ENCODE measurements at regions of chr17 and their contacts with region 1.

Region 1: DNA sequence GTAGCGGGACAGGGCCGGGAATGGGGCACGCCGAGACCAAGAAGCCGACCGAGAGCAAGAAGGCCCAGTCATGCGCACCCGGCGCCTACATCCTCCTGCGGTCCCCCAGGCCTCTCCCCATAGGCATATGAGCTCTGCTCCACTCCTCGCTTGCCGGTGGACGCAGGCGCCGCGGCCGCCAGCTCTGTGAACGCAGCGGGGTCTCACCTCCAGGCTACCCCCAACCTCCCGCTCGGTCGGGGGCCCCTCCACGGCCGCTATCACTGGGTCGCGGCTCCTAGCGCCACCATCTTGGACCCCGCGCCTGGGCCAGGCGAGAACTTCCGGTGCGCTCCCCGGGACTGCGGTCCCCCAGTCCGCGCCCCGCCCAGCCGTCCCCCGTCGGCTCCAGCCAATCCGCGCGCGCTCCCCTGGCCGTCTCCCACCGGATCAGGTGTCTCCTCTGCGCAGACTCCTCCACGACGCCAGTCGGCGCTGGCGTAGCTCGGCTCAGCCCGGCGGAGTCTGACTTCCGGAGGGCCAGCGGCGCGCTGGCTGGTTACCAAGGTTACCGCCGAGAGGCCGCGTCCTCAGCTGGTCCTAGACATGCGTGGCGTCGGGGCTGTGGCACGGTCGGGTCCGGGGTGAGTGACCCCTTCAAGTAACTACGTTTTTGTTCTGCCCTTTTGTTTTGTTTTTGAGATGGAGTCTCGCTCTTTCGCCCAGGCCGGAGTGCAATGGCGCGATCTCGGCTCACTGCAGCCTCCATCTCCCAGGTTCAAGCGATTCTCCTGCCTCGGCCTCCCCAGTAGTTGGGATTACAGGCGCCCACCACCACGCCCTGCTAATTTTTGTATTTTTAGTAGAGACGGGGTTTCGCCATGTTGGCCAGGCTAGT is at the start of gene ZNF594:
- DNase-seq: peak; percentile 94 to 96
- ATAC-seq: peak; percentile 97
- H3K4me3 ChIP-seq: peak within 1 kb of the TSS; percentile 85 to 92 (median 88)
- H3K27ac ChIP-seq: peak within 1 kb of the TSS; percentile 81 to 89 (median 84)
- H3K4me1 ChIP-seq: peaks cover 19 to 22% of the 10 kb centered on the region in 2 donors
- H3K27me3 ChIP-seq: no peaks in the 10 kb centered on the region
- CTCF ChIP-seq: peak; percentile 65 to 76 (median 69)
- POLR2A ChIP-seq: peak; percentile 69 to 86
- total RNA-seq, gene ZNF594: 1.1 to 6.7 (median 2.9) TPM

Region 2: DNA sequence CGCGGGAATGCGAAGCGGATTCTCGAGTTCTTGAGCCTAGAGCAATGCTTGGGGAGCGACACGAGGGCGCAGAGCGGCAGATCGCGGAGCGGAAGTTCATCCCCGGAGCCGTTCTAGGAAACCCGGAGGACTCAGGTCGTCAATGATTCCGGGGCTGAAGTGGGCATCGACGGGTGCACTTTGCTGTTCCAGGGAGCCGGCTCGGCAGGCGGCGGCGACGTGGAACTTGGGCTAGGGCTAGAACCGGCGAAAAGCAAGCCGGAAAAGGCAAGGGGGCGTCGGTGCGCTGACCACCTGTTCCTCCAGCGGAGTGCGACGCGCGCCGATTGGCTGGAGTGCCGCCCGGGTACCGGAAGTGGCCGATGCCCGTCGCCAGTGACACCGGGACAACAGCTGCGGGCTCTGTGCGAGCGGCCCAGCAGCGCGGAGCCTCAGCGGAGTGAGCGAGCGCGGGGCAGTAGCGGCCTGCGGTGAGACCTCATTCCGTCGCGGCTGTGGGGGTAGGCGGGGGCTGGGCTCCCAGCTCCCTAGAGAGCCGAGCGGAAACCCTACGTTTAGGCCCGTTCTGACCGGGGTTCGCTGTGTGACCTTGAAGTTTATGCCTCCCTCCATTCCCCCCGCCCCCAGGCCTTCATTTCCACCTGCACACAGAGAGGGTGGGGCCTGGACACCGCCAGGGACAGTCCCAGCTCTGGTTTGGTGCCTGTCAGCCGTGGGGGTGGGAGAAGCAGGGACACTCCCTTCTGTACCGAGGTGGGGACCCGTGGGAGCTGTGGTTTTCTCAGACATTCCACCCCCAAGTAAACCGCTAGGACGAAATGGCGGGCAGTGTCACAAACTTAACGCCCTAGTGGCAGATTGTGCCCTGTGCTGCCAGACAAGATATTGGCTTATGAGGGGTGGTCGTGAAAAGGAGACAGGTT is 113.4 kb before region 1 on chr17 and contains the start of gene ZFP3:
- in situ Hi-C with region 1: no loop called
- intact Hi-C with region 1: loop called (anchors 1 kb)
- DNase-seq: peak; percentile 81 to 89
- ATAC-seq: peak; percentile 98
- H3K4me3 ChIP-seq: peak within 1 kb of the TSS; percentile 88 to 98 (median 94)
- H3K27ac ChIP-seq: peak within 1 kb of the TSS; percentile 91 to 98 (median 97)
- H3K4me1 ChIP-seq: peaks cover 17 to 19% of the 10 kb centered on the region in 2 donors
- H3K27me3 ChIP-seq: no peaks in the 10 kb centered on the region
- CTCF ChIP-seq: peak in 2 of 5 experiments; percentile 3 to 31
- POLR2A ChIP-seq: peak; percentile 85 to 90
- total RNA-seq, gene ZFP3: 6.1 to 11.4 (median 7.6) TPM

Region 3: GRCh38 chr17:5111402-5112204 is 80.2 kb before region 1 on chr17 and contains the start of gene ZNF232:
- in situ Hi-C with region 1: no loop called
- intact Hi-C with region 1: loop called (anchors 5 kb)
- DNase-seq: peak; percentile 90 to 93
- ATAC-seq: peak; percentile 87 to 94
- H3K4me3 ChIP-seq: peak within 1 kb of the TSS; percentile 90 to 95 (median 93)
- H3K27ac ChIP-seq: peak within 1 kb of the TSS; percentile 87 to 94 (median 89)
- H3K4me1 ChIP-seq: peaks cover 14 to 15% of the 10 kb centered on the region in 2 donors
- H3K27me3 ChIP-seq: peaks cover 22 to 24% (median 23%) of the 10 kb centered on the region in 3 donors
- CTCF ChIP-seq: no peak
- POLR2A ChIP-seq: peak; percentile 72 to 74
- total RNA-seq, gene ZNF232: 5.8 to 13.5 (median 7.7) TPM

Region 4: DNA sequence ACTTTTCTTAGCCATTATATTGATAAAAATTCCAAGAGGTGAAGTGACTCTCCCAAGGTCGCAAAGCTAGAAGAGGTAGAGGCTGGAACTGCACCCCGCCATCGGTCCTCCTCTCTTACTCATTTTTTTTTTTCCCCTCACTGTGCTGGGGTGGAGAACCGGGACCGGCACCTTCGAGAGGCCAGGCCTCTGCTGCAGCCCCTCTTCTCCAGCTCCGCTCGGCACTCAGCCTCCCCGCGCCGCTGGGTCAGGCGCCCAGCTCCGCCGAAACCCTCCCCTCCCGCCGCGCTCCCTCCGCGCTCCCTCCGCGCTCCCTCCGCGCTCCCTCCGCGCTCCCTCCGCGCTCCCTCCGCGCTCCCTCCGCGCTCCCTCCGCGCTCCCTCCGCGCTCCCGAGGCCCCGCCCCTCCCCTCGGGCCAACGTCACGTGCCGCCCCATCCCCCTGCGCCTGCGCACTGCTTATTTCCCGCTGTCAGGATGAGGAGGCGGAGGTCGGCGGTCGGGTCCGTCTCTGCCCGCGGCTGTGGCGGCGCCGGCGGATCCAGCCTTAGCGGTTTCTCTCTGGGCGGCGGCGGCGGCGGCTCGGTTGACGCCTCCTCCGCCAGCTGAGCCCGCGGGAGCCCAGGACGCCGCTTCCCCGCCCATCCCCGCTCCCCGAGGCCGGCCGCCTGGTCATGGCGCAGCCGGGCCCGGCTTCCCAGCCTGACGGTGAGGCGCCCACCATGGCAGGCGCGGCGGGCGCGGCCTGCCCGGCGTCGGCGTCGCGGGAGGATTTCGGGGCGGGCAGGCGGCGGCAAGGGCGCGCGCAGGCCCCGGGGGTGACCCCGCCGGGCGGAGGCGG is 90.3 kb after region 1 on chr17 and contains the start of gene RABEP1:
- in situ Hi-C with region 1: no loop called
- intact Hi-C with region 1: loop called (anchors 5 kb)
- DNase-seq: peak; percentile 85 to 88
- ATAC-seq: peak; percentile 90 to 91
- H3K4me3 ChIP-seq: peak within 1 kb of the TSS; percentile 72 to 82 (median 76)
- H3K27ac ChIP-seq: peak within 1 kb of the TSS; percentile 93 to 98 (median 97)
- H3K4me1 ChIP-seq: peaks cover 28 to 36% of the 10 kb centered on the region in 2 donors
- H3K27me3 ChIP-seq: no peaks in the 10 kb centered on the region
- CTCF ChIP-seq: peak; percentile 7 to 53 (median 32)
- POLR2A ChIP-seq: peak; percentile 96 to 97
- total RNA-seq, gene RABEP1: 55.4 to 94.8 (median 87.2) TPM

Region 5: DNA sequence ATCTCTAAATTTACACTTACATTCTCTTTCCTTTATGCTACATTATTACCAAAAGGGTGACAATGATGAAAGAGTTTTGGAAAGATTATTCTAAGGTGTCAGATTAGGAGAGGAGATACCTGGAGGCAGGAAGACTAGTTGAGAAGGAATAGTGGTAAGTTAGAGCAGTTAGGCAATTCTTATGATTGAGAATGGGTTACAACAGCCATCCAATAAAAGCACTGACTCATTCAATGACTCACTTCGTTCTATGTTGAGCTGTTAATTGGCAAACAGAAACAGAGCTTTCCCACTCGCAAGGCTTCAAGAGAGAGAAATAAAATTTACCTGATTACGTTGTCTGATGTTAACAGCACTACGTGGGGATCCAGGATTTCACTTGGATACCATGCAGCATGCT is 221.9 kb after region 1 on chr17:
- in situ Hi-C with region 1: no loop called
- intact Hi-C with region 1: no loop called
- DNase-seq: no peak
- ATAC-seq: peak; percentile 96 to 97
- H3K4me3 ChIP-seq: no peak overlapping the region
- H3K27ac ChIP-seq: peak overlapping the region; percentile 80 to 83 (median 82)
- H3K4me1 ChIP-seq: peaks cover 24 to 50% of the 10 kb centered on the region in 2 donors
- H3K27me3 ChIP-seq: no peaks in the 10 kb centered on the region
- CTCF ChIP-seq: no peak
- POLR2A ChIP-seq: no peak

Region 6: GRCh38 chr17:5438716-5439445 is 247.1 kb after region 1 on chr17 and contains the start of gene C1QBP:
- in situ Hi-C with region 1: no loop called
- intact Hi-C with region 1: loop called (anchors 2 kb)
- DNase-seq: peak; percentile 70 to 87
- ATAC-seq: peak; percentile 97 to 98
- H3K4me3 ChIP-seq: peak within 1 kb of the TSS; percentile 69 to 88 (median 78)
- H3K27ac ChIP-seq: peak within 1 kb of the TSS; percentile 77 to 86 (median 83)
- H3K4me1 ChIP-seq: peaks cover 19% of the 10 kb centered on the region in 2 donors
- H3K27me3 ChIP-seq: no peaks in the 10 kb centered on the region
- CTCF ChIP-seq: peak; percentile 98 to 100 (median 99)
- POLR2A ChIP-seq: peak; percentile 49 to 59
- total RNA-seq, gene C1QBP: 102 to 200 (median 134) TPM

Measured in gastrocnemius medialis (tissue), 4 donors.